Transverse colon (tissue), 4 donors: ENCODE measurements at regions of chr9 and their contacts with region 1.

Region 1: GRCh38 chr9:3732077-3733038 is 206.6 kb upstream of the RFX3 start:
- DNase-seq: peak; percentile 41
- H3K4me3 ChIP-seq: peak overlapping the region in 1 of 4 donors; percentile 29
- H3K27ac ChIP-seq: peak overlapping the region in 2 of 4 donors; percentile 24 to 29
- H3K4me1 ChIP-seq: peaks cover 0 to 8% (median 3%) of the 10 kb centered on the region in 4 donors
- H3K27me3 ChIP-seq: no peaks in the 10 kb centered on the region
- CTCF ChIP-seq: peak; percentile 59 to 87 (median 73)
- EP300 ChIP-seq: no peak
- POLR2A ChIP-seq: no peak

Region 2: DNA sequence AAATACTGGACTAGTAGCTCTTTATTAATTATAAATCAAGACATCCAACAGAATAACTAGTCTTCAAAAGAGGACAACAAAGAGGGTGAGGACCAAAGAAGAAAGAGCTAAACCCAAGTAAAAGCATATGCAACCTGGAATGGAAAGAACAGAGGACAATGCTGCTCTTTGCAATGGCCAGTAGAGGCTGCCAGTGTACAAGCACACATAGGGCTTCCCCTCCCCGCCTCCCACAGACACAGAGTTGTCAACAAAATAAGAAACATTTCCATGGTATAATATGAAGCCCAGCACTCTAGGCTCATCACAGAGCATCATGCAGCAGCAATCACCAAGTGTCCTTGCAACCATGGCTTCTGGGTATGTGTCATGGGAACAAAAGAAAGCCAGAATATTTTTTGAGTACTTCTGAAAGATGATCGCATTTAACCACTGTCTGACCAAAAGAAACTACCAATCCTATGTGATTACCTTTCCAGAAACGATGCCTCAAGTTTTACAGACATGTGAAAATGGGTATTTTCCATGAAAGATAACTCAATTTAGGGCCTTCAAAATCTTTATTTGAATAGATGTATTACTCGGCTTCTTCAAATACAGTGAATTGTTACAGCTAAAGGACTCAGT is 264.7 kb before region 1 on chr9:
- in situ Hi-C with region 1: loop called in 1 of 4 experiments (anchors 25 kb)
- intact Hi-C with region 1: no loop called
- DNase-seq: peak; percentile 47
- H3K4me3 ChIP-seq: no peak overlapping the region
- H3K27ac ChIP-seq: no peak overlapping the region
- H3K4me1 ChIP-seq: peaks cover 0 to 10% (median 0%) of the 10 kb centered on the region in 4 donors
- H3K27me3 ChIP-seq: no peaks in the 10 kb centered on the region
- CTCF ChIP-seq: peak; percentile 57 to 73 (median 66)
- EP300 ChIP-seq: no peak
- POLR2A ChIP-seq: no peak

Region 3: GRCh38 chr9:4228606-4229005 is 496.2 kb after region 1 on chr9:
- in situ Hi-C with region 1: loop called in 1 of 4 experiments (anchors 25 kb)
- intact Hi-C with region 1: no loop called
- DNase-seq: no peak
- H3K4me3 ChIP-seq: no peak overlapping the region
- H3K27ac ChIP-seq: no peak overlapping the region
- H3K4me1 ChIP-seq: peaks cover 0 to 4% (median 4%) of the 10 kb centered on the region in 4 donors
- H3K27me3 ChIP-seq: no peaks in the 10 kb centered on the region
- CTCF ChIP-seq: peak; percentile 46 to 60 (median 53)
- EP300 ChIP-seq: no peak
- POLR2A ChIP-seq: no peak

Region 4: GRCh38 chr9:4344946-4345345 is 612.6 kb after region 1 on chr9:
- in situ Hi-C with region 1: loop called in 3 of 4 experiments (anchors 10 to 25 kb)
- intact Hi-C with region 1: no loop called
- DNase-seq: no peak
- H3K4me3 ChIP-seq: no peak overlapping the region
- H3K27ac ChIP-seq: no peak overlapping the region
- H3K4me1 ChIP-seq: no peaks in the 10 kb centered on the region
- H3K27me3 ChIP-seq: no peaks in the 10 kb centered on the region
- CTCF ChIP-seq: no peak
- EP300 ChIP-seq: no peak
- POLR2A ChIP-seq: no peak

Region 5: GRCh38 chr9:4375424-4376200 is 643.3 kb after region 1 on chr9:
- in situ Hi-C with region 1: loop called in 1 of 4 experiments (anchors 25 kb)
- intact Hi-C with region 1: loop called (anchors 10 kb)
- DNase-seq: no peak
- H3K4me3 ChIP-seq: no peak overlapping the region
- H3K27ac ChIP-seq: no peak overlapping the region
- H3K4me1 ChIP-seq: peaks cover 0 to 2% (median 0%) of the 10 kb centered on the region in 4 donors
- H3K27me3 ChIP-seq: no peaks in the 10 kb centered on the region
- CTCF ChIP-seq: peak; percentile 30 to 45 (median 38)
- EP300 ChIP-seq: no peak
- POLR2A ChIP-seq: no peak

Region 6: DNA sequence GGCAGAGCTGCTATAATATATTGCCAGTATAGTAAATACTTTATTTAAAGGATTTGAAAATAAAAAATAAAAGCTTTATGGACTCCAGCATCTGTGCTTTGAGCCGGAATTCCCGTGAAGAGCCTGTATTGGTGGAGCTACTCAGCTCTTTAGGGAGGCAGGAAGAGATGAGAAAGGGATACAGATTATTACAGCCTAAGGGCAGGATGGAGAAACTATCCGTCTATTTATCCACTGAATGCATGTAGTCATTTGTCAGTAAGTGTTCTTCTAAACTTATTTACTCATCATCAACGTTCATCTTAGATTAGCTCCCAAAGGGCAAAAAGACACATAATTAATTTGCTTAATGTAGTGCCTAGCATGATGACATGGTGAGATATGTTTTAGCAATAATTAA is 806.3 kb after region 1 on chr9:
- in situ Hi-C with region 1: no loop called
- intact Hi-C with region 1: no loop called
- DNase-seq: no peak
- H3K4me3 ChIP-seq: no peak overlapping the region
- H3K27ac ChIP-seq: no peak overlapping the region
- H3K4me1 ChIP-seq: peaks cover 0 to 12% (median 3%) of the 10 kb centered on the region in 4 donors
- H3K27me3 ChIP-seq: no peaks in the 10 kb centered on the region
- CTCF ChIP-seq: no peak
- EP300 ChIP-seq: no peak
- POLR2A ChIP-seq: no peak